ENCODE measurements at regions of chr5 and their contacts with region 1.

Region 1: DNA sequence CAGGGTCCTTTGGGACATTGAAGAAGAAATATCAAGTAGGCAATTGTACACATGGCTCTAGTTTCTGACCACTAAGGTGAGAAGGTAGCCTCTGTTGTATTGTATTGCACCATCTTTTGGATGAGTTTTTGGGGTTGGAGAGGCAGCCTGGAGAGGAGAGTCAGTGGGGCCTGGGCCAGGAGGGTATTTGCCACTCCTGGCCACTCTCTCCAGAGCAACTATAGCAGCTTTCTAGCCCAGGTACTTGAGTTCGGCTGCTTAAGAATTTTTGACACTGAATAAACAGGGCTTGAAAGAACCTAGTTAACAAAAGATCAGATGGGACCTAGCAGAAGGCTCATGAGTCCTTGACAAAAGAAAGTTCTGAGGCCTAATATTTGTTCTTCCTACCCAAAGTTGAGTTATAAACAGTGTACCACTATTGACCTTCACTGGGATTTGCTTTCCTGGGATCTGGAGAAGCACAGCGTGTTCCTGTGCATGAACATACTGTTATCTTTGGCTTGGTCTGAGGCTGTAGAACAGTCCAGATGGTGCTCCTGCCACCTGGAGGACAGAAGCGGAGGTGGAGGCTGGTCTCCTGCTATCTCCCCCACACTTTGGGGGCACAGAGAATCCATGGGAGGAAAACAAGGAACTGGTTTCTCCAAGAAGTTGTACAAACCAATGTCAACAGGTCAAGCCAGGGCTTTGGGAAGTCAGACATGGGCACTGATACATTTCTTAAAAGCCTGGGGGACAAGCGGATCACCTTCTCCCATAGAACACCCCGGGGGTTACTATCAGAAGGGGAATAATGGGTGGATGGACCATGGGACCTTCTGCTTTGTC is 110.4 kb upstream of the LIFR start:
- DNase-seq: peak in 4 of 6 donors; percentile 58 to 72 (median 61)
- ATAC-seq: peak; percentile 95 to 99 (median 98)
- H3K4me3 ChIP-seq: no peak overlapping the region
- H3K27ac ChIP-seq: peak overlapping the region in 3 of 4 donors; percentile 2 to 17 (median 10)
- H3K4me1 ChIP-seq: peaks cover 4 to 19% (median 8%) of the 10 kb centered on the region in 3 donors
- H3K27me3 ChIP-seq: no peaks in the 10 kb centered on the region
- CTCF ChIP-seq: peak; percentile 39 to 72 (median 62)

Region 2: DNA sequence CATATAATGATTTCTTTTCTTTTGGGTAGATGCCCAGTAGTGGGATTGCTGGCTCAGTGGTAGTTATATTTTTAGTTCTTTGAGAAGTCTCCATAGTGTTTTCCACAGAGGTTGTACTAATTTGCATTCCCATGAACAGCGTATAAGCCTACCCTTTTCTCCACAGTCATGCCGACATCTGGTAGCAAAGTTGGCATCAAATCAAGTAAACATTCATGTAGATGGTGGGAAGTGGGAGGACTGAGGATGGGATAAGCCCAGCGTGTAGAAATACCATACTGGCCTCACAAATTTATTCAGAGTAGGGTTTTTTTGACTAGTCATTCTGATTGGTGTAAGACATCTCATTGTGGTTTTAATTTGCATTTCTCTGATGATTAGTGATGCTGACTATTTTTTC is 293.1 kb before region 1 on chr5:
- intact Hi-C with region 1: no loop called
- DNase-seq: no peak
- ATAC-seq: no peak
- H3K4me3 ChIP-seq: no peak overlapping the region
- H3K27ac ChIP-seq: no peak overlapping the region
- H3K4me1 ChIP-seq: no peaks in the 10 kb centered on the region
- H3K27me3 ChIP-seq: no peaks in the 10 kb centered on the region
- CTCF ChIP-seq: no peak

Region 3: DNA sequence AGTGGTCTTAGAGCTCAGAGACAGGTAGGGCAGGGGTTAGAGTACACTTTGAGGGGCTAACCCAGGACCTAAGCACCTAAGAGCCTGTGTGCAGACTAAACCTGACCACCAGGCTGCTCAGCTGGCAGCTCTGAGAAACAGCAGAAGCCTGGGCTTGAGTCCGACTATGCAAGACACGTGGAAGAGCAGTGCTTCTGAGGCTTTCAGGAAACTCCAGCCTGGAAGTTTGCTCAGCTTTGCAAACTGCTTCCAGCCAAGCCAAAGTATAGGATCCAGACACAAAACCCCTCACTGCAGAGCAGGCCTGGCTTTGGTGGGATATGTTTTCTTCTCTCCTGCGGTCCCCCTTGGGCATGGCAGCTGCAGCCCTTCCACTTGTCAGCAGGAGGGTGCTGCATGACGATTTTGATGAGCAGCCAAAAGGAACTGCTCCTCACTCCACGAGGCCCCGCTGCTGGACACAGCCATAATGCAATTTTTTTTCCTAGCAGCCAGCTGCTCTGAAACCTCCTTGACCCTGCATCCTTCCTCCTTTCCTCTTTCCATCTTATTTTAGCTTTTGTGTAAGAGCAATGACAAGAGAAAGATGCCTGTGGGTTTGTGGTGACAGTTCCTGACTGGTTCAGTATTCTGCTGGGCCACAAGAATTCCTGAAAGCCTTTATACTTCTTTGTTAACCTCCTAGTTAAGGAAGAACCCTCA is 233.6 kb before region 1 on chr5:
- intact Hi-C with region 1: loop called in 1 of 3 experiments (anchors 5 kb)
- DNase-seq: no peak
- ATAC-seq: peak in 1 of 4 donors; percentile 50
- H3K4me3 ChIP-seq: no peak overlapping the region
- H3K27ac ChIP-seq: no peak overlapping the region
- H3K4me1 ChIP-seq: no peaks in the 10 kb centered on the region
- H3K27me3 ChIP-seq: peaks cover 0 to 3% (median 0%) of the 10 kb centered on the region in 4 donors
- CTCF ChIP-seq: no peak

Region 4: GRCh38 chr5:38441453-38442246 is 225.2 kb before region 1 on chr5:
- intact Hi-C with region 1: loop called in 2 of 3 experiments (anchors 5 kb)
- DNase-seq: peak; percentile 76 to 91 (median 86)
- ATAC-seq: peak; percentile 99 to 100 (median 99)
- H3K4me3 ChIP-seq: no peak overlapping the region
- H3K27ac ChIP-seq: no peak overlapping the region
- H3K4me1 ChIP-seq: no peaks in the 10 kb centered on the region
- H3K27me3 ChIP-seq: no peaks in the 10 kb centered on the region
- CTCF ChIP-seq: peak; percentile 81 to 96 (median 90)

Region 5: DNA sequence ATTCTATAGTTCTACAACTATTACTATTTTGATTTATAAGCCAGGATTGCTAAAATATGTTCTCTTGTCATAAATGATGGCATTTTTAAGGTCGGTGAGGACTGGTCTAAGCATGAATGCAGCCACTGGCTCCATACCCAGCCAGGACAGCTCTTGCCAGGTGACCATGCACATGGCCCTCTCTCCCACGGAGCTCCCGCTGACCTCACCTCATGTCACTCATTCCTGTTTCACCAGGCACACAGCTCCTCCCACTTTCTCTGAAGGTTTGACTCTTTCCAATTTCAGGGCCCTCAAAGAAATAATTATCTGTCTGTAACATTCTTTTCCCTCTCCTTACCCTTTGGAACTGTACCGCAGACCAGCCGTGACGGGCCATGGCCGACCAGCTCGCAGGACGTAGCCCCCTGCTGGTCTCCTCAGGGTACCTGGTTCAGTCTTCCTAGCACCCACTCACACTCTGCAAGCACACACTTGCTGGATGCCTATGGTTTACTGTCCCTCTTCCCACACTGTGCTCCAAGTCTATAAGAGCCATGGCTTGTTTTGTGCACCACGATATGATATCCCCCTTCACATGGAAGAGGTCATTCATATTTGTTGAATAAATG is 183.0 kb before region 1 on chr5:
- intact Hi-C with region 1: no loop called
- DNase-seq: no peak
- ATAC-seq: no peak
- H3K4me3 ChIP-seq: no peak overlapping the region
- H3K27ac ChIP-seq: no peak overlapping the region
- H3K4me1 ChIP-seq: no peaks in the 10 kb centered on the region
- H3K27me3 ChIP-seq: no peaks in the 10 kb centered on the region
- CTCF ChIP-seq: no peak

Region 6: DNA sequence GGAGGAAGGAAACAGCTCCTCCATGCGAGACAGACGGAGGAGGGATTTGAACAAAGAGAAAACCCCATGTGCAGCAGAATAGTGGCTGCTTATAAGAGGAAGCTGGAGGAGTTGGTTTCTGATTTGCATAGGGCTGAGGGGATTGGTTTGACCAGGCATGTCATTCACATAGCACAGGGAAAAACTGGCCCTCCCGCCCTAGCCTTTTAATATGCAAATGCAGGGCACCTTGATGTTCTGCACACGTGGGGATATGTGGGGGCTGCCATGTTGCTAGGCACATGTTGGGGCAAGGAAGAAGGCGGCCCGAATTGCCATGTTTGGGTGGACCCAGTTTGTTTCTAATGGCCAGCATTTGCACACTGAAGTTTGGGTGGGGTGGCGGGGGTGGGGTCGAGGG is 221.2 kb after region 1 on chr5:
- intact Hi-C with region 1: no loop called
- DNase-seq: no peak
- ATAC-seq: no peak
- H3K4me3 ChIP-seq: no peak overlapping the region
- H3K27ac ChIP-seq: no peak overlapping the region
- H3K4me1 ChIP-seq: no peaks in the 10 kb centered on the region
- H3K27me3 ChIP-seq: no peaks in the 10 kb centered on the region
- CTCF ChIP-seq: no peak

Region 7: DNA sequence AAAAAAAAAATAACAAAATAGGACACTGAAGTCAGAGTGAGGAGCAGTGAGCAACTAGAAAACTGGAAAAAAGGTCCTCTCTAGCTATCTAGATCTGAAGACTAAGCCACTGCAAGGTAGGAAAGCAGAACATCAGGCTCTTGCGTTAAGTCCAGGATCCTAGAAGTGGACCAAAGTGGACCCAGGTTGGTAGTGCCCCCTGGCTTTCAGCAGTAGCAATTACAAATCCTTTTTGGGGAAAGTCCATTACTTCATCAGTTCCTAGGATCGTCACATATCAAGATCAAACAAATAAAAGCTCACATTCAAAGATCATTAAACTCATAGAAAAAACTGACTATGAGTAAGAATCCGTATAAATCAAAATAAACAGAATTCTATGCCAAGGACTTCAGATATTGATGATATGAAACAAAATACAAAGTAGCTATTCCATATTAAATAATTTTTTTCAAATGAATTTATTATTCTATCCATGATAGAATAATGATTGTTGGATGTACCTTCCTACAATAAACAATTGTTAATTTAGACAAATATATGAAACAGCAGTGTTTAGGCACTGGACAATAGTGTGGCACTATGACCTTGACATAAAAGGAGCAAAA is 413.8 kb after region 1 on chr5:
- intact Hi-C with region 1: no loop called
- DNase-seq: peak in 4 of 6 donors; percentile 40 to 67 (median 48)
- ATAC-seq: peak; percentile 91 to 99 (median 95)
- H3K4me3 ChIP-seq: no peak overlapping the region
- H3K27ac ChIP-seq: no peak overlapping the region
- H3K4me1 ChIP-seq: peaks cover 0 to 4% (median 0%) of the 10 kb centered on the region in 3 donors
- H3K27me3 ChIP-seq: no peaks in the 10 kb centered on the region
- CTCF ChIP-seq: peak; percentile 61 to 74 (median 69)

Measured in pancreas (tissue), 10 donors.